ENCODE measurements at regions of chr9 and their contacts with region 1.

Region 1: DNA sequence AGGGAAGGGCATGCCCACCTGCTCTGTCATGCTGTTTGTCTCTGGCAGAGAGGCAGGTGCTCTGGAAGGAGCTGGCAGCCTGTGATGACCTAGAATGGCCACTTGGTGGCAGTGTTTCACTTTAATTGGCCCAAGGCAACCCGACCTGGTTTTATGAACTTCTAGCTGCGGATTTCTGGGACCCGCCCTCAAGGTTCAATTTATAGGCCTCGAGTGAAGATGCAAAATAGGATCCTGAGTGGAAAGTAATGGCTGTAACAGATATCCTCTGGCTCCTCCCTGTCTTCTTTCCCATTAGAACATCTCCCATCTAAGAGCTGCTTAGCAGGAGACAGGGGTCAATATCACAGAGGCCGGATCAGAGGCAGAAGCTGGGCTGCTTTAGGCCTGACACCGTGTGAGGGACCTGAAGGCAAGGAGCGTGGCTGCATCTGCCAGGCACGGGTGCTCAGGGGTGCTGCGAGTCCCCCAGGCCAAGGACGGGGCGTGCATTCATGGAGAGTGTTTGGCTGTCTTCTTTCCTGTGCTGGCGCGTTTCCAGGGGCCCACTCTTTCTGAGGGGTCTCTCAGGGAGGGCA is 56.7 kb upstream of the SLC28A3 start:
- DNase-seq: peak; percentile 39
- ATAC-seq: peak; percentile 94
- H3K4me3 ChIP-seq: no peak overlapping the region
- H3K27ac ChIP-seq: no peak overlapping the region
- H3K4me1 ChIP-seq: no peaks in the 10 kb centered on the region
- H3K27me3 ChIP-seq: no peaks in the 10 kb centered on the region
- CTCF ChIP-seq: peak; percentile 85
- EP300 ChIP-seq: no peak
- POLR2A ChIP-seq: no peak
- RAD21 ChIP-seq: peak; percentile 82

Region 2: DNA sequence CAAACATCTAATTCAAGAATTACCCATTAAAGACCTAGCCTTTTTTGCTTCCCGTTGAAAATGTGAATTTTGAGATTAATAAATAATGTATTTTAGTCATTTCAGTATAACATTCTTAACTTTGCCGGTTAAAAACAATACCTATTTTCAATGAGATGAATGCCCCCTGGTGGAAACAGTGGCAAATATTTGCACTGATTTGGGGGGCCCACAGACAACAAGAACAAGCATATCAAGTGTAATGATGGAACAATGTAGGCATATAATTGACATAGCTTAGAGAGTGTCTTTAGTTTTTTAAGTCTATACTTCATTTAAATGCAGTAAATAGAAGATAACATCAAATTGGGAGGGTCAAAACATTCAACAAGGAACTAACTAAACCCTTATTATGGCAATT is 384.2 kb after region 1 on chr9:
- CTCF ChIA-PET with region 1: interaction called, 6 read pairs
- POLR2A ChIA-PET with region 1: no interaction called
- in situ Hi-C with region 1: loop called (anchors 5 kb)
- intact Hi-C with region 1: no loop called
- DNase-seq: peak; percentile 23
- ATAC-seq: no peak
- H3K4me3 ChIP-seq: no peak overlapping the region
- H3K27ac ChIP-seq: no peak overlapping the region
- H3K4me1 ChIP-seq: no peaks in the 10 kb centered on the region
- H3K27me3 ChIP-seq: no peaks in the 10 kb centered on the region; a peak in 1 of 5 replicates
- CTCF ChIP-seq: peak; percentile 36
- EP300 ChIP-seq: no peak
- POLR2A ChIP-seq: no peak
- RAD21 ChIP-seq: no peak

Region 3: DNA sequence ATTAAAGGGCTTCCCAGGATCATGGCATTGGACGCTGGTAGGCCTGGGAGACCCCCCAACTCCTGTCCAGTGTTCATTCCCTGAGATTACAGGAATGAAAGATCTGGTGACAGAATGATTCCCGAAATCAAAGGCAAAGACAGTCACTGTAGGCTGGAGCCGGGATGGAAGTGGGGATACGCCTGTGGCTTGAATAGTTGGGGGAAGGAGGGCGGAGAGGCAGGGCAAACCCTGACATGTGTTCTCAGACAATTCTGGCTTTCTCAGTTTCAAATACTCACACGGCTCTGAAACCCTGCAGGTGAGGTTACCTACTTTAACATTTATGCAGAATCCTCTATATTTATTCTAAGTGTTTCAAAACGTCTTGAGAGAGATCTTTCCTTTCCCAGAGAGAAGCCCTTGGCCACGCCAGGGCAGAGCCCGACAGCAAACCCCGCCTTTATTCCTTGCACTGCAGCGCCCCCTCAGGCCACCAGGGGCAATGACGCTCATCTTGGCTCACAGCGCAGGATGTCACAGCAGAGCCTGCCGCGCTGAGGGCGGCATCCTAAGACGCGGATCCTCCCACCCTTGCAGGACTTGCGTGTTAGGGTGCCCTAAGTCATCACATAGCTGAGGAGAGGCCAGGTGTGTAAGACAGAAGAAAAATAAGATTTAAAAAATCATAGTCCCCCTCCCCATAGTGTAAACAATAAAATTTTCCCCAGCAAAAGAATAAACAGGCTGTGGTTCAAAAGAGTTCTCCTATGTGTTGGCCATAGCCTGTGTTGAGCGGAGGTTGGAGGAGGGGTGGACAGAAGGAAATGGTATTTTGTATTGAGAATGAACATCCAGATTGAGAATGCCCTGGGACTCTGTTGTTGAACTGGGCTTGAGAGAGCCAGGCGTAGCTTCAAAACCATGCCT is 556.8 kb after region 1 on chr9:
- CTCF ChIA-PET with region 1: no interaction called
- POLR2A ChIA-PET with region 1: no interaction called
- in situ Hi-C with region 1: loop called (anchors 25 kb)
- intact Hi-C with region 1: no loop called
- DNase-seq: peak; percentile 17
- ATAC-seq: peak; percentile 97
- H3K4me3 ChIP-seq: no peak overlapping the region
- H3K27ac ChIP-seq: no peak overlapping the region
- H3K4me1 ChIP-seq: no peaks in the 10 kb centered on the region
- H3K27me3 ChIP-seq: no peaks in the 10 kb centered on the region
- CTCF ChIP-seq: peak; percentile 74
- EP300 ChIP-seq: no peak
- POLR2A ChIP-seq: no peak
- RAD21 ChIP-seq: peak; percentile 31; the same call in 1 of the 2 replicates

Region 4: DNA sequence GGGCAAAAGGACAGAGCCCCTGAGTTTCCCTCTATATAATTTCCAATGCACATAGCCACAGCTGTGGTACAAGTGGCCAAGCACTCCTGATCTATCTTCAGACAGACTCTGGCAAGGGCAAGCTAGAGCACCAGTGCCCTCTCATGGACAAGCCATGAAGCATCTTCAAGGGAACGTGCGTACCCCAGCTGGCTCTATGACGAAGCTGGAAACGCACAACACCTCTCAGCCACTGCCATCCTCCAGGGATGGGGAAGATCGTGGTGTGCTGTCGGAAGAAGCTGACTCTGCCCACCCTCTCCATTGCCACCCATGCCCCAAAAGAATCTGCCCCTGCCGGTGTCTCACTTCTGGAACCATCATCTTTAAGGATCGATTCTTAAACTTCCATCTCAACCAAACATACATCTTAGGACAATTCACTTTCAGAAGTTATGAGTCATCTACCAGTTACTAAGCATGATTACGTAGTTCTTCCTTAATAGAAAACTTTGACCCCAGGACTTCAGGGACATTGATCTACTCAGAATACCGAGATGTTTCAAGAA is 861.7 kb after region 1 on chr9:
- CTCF ChIA-PET with region 1: no interaction called
- POLR2A ChIA-PET with region 1: no interaction called
- in situ Hi-C with region 1: loop called (anchors 25 kb)
- intact Hi-C with region 1: loop called (anchors 1 kb)
- DNase-seq: peak; percentile 39
- ATAC-seq: peak; percentile 95
- H3K4me3 ChIP-seq: no peak overlapping the region
- H3K27ac ChIP-seq: no peak overlapping the region
- H3K4me1 ChIP-seq: no peaks in the 10 kb centered on the region
- H3K27me3 ChIP-seq: no peaks in the 10 kb centered on the region
- CTCF ChIP-seq: peak; percentile 76
- EP300 ChIP-seq: no peak
- POLR2A ChIP-seq: no peak
- RAD21 ChIP-seq: peak; percentile 35

Region 5: GRCh38 chr9:85425153-85425611 is 1027.9 kb after region 1 on chr9:
- CTCF ChIA-PET with region 1: interaction called, 3 read pairs
- POLR2A ChIA-PET with region 1: no interaction called
- in situ Hi-C with region 1: no loop called
- intact Hi-C with region 1: loop called (anchors 2 kb)
- DNase-seq: peak; percentile 27
- ATAC-seq: peak; percentile 85
- H3K4me3 ChIP-seq: no peak overlapping the region
- H3K27ac ChIP-seq: no peak overlapping the region
- H3K4me1 ChIP-seq: no peaks in the 10 kb centered on the region
- H3K27me3 ChIP-seq: peaks cover 1 to 24% of the 10 kb centered on the region in 2 experiments; a peak in 3 of 5 replicates
- CTCF ChIP-seq: peak; percentile 76
- EP300 ChIP-seq: no peak
- POLR2A ChIP-seq: no peak
- RAD21 ChIP-seq: peak; percentile 39; the same call in 1 of the 2 replicates

Region 6: GRCh38 chr9:85610074-85610860 is 1213.0 kb after region 1 on chr9:
- CTCF ChIA-PET with region 1: no interaction called
- POLR2A ChIA-PET with region 1: no interaction called
- in situ Hi-C with region 1: no loop called
- intact Hi-C with region 1: loop called (anchors 2 kb)
- DNase-seq: peak; percentile 60
- ATAC-seq: peak; percentile 87
- H3K4me3 ChIP-seq: no peak overlapping the region
- H3K27ac ChIP-seq: no peak overlapping the region
- H3K4me1 ChIP-seq: no peaks in the 10 kb centered on the region
- H3K27me3 ChIP-seq: no peaks in the 10 kb centered on the region
- CTCF ChIP-seq: peak; percentile 84
- EP300 ChIP-seq: no peak
- POLR2A ChIP-seq: no peak
- RAD21 ChIP-seq: 0 out of 2 replicates have a peak, but pooled peaks have one; percentile 51